ENCODE measurements at regions of chr22 and their contacts with region 1.

Region 1: GRCh38 chr22:40055143-40055883 is 60.6 kb downstream of the FAM83F start:
- DNase-seq: no peak
- H3K4me3 ChIP-seq: no peak overlapping the region
- H3K27ac ChIP-seq: no peak overlapping the region
- H3K4me1 ChIP-seq: peaks cover 7 to 46% of the 10 kb centered on the region in 2 donors
- H3K27me3 ChIP-seq: no peaks in the 10 kb centered on the region
- CTCF ChIP-seq: no peak
- POLR2A ChIP-seq: no peak

Region 2: GRCh38 chr22:40161194-40161593 is 105.9 kb after region 1 on chr22:
- intact Hi-C with region 1: loop called in 1 of 2 experiments (anchors 10 kb)
- DNase-seq: no peak
- H3K4me3 ChIP-seq: no peak overlapping the region
- H3K27ac ChIP-seq: no peak overlapping the region
- H3K4me1 ChIP-seq: peaks cover 0 to 9% of the 10 kb centered on the region in 2 donors
- H3K27me3 ChIP-seq: no peaks in the 10 kb centered on the region
- CTCF ChIP-seq: no peak
- POLR2A ChIP-seq: no peak

Region 3: DNA sequence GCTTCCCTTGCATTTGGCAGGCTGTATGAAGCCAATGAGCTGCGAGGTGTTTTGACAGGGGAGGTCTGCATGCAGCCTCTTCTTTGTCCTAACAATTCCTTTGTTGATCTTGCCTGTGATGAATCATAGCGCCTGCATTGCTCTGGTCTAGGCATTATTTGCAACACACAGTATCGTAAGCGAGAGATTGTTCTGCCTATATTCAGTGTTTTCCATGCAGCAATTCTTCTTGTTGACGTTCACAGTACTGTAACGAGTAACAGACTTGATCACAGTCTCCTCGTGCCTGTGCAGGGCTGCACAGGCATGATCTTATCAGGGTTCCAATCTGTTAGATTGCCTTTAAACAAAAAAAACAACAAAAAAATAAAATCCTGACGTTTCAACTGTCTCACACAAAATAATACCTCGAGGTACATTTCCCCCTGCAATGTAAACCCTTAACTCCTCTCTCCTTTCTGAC is 277.0 kb after region 1 on chr22:
- intact Hi-C with region 1: loop called in 1 of 2 experiments (anchors 10 kb)
- DNase-seq: peak in 1 of 7 donors; percentile 24
- H3K4me3 ChIP-seq: no peak overlapping the region
- H3K27ac ChIP-seq: no peak overlapping the region
- H3K4me1 ChIP-seq: no peaks in the 10 kb centered on the region
- H3K27me3 ChIP-seq: no peaks in the 10 kb centered on the region
- CTCF ChIP-seq: no peak
- POLR2A ChIP-seq: no peak

Region 4: DNA sequence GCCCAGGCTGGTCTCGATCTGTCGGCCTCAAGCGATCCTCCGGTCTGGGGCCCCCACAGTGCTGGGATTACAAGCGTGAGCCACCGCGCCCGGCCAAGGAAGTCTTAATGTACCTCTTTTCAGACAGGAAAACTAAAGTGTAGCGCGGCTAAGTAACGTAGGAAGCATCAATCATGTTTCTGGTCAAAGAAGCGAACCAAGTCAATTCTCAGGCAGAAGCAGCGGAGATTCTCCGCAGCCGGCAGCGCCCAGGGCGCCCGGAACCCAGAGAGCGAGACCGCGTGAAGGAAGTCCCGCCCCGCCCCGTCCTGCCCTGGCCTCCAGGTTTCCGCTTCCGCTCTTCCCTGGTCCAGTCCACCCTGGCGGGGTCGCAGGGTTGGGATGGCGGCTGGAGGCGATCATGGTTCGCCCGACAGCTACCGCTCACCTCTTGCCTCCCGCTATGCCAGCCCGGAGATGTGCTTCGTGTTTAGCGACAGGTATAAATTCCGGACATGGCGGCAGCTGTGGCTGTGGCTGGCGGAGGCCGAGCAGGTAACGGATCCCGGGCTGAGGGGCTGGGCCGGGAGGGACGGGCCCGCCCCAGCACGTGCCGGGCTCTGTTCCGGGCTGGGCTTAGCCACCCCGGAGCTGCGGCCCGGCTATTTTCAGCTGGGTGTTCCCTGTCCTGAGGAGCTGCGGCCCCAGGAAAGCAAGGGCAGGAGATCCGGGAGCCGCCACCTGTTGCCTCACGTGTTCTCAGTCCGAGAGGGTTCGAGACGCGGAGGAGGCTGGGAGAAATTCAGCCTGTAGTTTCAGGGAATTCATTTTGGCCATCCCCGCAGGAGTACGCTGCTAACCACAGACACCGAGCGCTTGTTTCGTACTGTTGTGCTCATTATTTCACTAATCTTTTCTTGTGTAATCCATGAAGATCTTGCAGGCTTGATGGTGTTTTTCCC is 291.1 kb after region 1 on chr22 and contains the start of gene ADSL:
- intact Hi-C with region 1: loop called in 1 of 2 experiments (anchors 10 kb)
- DNase-seq: peak; percentile 87 to 92 (median 91)
- H3K4me3 ChIP-seq: peak within 1 kb of the TSS; percentile 62 to 95 (median 84)
- H3K27ac ChIP-seq: peak within 1 kb of the TSS; percentile 77 to 94 (median 84)
- H3K4me1 ChIP-seq: peaks cover 22 to 23% of the 10 kb centered on the region in 2 donors
- H3K27me3 ChIP-seq: no peaks in the 10 kb centered on the region
- CTCF ChIP-seq: peak in 2 of 6 experiments; percentile 6 to 30
- POLR2A ChIP-seq: peak; percentile 87
- total RNA-seq, gene ADSL: 26.8 to 107 (median 60.4) TPM